PC-9 (cell line): ENCODE measurements at regions of chr19 and their contacts with region 1.

Region 1: GRCh38 chr19:41206926-41207750 is 11.9 kb upstream of the AXL start:
- DNase-seq: no peak
- H3K4me3 ChIP-seq: no peak overlapping the region
- H3K27ac ChIP-seq: no peak overlapping the region
- H3K4me1 ChIP-seq: no peaks in the 10 kb centered on the region
- H3K27me3 ChIP-seq: no peaks in the 10 kb centered on the region
- CTCF ChIP-seq: no peak

Region 2: DNA sequence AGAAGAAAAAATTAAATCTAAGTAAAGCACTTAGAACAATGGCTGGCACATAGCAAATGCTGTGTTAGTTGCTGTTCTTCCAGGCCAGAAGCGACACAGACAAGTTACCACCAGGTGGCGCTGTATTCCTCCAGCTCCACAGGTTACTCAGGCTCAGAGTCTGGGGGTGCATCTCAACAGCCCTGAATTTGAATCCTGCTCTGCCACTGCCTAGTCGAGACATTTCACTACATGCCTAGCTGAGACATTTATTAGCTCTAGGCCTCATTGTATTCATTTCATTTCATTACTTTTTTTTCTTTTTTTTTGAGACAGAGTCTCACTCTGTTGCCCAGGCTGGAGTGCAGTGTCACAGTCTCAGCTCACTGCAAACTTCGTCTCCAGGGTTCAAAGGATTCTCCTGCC is 232.5 kb before region 1 on chr19:
- CTCF ChIA-PET with region 1: no interaction called
- POLR2A ChIA-PET with region 1: no interaction called
- intact Hi-C with region 1: no loop called
- DNase-seq: peak; percentile 42 to 63
- H3K4me3 ChIP-seq: no peak overlapping the region
- H3K27ac ChIP-seq: no peak overlapping the region
- H3K4me1 ChIP-seq: no peaks in the 10 kb centered on the region
- H3K27me3 ChIP-seq: peaks cover 7% of the 10 kb centered on the region; the same call in 1 of the 2 replicates
- CTCF ChIP-seq: peak; percentile 94

Region 3: DNA sequence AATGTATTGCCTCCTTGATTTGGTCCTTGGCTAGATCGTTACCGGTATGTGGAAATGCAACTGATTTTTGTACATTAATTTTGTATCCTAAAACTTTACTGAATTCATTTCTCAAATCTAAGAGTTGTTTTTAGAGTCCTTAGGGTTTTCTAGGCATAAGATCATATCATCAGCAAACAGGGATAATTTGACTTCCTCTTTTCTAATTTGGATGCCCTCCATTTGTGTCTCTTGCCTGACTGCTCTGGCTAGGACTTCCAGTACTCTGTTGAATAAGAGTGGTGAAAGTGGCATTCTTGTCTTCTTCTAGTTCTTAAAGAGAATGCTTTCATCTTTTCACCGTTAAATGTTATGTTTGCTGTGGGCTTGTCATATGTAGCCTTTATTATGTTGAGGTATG is 130.9 kb before region 1 on chr19:
- CTCF ChIA-PET with region 1: no interaction called
- POLR2A ChIA-PET with region 1: no interaction called
- intact Hi-C with region 1: no loop called
- DNase-seq: no peak
- H3K4me3 ChIP-seq: no peak overlapping the region
- H3K27ac ChIP-seq: no peak overlapping the region
- H3K4me1 ChIP-seq: no peaks in the 10 kb centered on the region
- H3K27me3 ChIP-seq: no peaks in the 10 kb centered on the region
- CTCF ChIP-seq: no peak

Region 4: DNA sequence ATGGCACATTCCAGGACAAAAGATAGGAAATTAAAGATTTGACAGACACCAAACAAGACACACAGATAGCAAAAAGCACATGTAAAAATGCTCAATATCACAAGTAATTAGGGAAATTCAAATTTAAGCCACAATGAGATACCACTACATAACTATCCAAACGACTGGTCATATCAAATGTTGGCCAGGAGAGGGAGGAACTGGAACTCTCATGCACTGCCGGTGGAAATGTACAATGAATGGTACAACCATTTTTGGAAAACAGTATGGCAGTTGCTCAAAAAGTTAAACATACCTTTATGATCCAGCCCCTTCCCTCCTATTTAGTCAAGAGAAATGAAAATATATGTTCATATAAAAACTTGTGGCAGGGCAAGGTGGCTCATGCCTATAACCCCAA is 50.9 kb before region 1 on chr19:
- CTCF ChIA-PET with region 1: interaction called, 4 read pairs
- POLR2A ChIA-PET with region 1: no interaction called
- intact Hi-C with region 1: loop called (anchors 10 kb)
- DNase-seq: no peak
- H3K4me3 ChIP-seq: no peak overlapping the region
- H3K27ac ChIP-seq: no peak overlapping the region
- H3K4me1 ChIP-seq: peaks cover 11% of the 10 kb centered on the region
- H3K27me3 ChIP-seq: no peaks in the 10 kb centered on the region
- CTCF ChIP-seq: peak; percentile 34; the same call in 1 of the 2 replicates

Region 5: DNA sequence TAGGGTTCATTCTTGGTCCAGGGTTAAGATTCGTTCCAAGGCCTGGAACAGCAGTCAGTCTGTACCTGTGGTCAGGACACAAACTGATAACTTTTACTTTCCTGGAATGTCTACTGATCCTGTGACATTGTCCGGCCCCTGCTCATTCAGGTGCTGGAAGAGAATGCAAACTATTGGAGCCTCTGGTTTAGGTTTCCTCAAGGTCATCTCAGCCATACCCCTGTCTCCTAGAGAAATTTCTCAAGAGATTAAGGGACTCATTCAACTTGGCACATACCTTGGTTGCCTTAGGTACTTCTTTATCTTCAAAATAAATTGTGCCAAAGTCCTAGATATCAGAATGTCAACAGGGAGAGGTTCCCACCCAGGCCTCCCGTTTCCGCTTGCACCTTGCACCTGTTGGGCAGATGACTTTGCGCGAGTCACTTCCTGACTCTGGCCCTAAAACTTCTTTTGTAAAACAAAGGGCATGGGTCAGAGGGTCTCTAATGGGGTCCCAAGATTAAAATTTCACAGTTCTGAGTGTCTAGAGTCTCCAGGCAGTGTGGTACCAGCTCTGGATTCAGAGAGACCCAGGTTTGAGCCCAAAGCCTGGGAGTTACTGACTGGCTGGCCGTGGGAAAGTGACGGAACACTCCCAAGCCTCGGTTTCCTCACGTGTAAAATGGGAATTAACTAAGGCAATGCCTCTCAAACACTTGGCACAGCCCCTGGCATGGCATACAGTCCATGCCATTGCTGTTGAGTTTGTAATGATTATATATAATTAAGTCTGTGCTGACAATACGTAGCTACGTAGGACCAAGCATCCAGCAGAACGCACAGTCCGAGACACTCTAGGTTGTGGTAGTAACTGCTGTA is 40.0 kb before region 1 on chr19:
- CTCF ChIA-PET with region 1: no interaction called
- POLR2A ChIA-PET with region 1: no interaction called
- intact Hi-C with region 1: no loop called
- DNase-seq: peak; percentile 19 to 59
- H3K4me3 ChIP-seq: no peak overlapping the region
- H3K27ac ChIP-seq: peak overlapping the region; percentile 34; the same call in 1 of the 2 replicates
- H3K4me1 ChIP-seq: peaks cover 16% of the 10 kb centered on the region
- H3K27me3 ChIP-seq: no peaks in the 10 kb centered on the region
- CTCF ChIP-seq: no peak

Region 6: GRCh38 chr19:41248895-41249294 is 41.8 kb after region 1 on chr19:
- CTCF ChIA-PET with region 1: interaction called, 19 read pairs
- POLR2A ChIA-PET with region 1: no interaction called
- intact Hi-C with region 1: no loop called
- DNase-seq: no peak
- H3K4me3 ChIP-seq: no peak overlapping the region
- H3K27ac ChIP-seq: no peak overlapping the region
- H3K4me1 ChIP-seq: no peaks in the 10 kb centered on the region
- H3K27me3 ChIP-seq: no peaks in the 10 kb centered on the region
- CTCF ChIP-seq: no peak

Region 7: DNA sequence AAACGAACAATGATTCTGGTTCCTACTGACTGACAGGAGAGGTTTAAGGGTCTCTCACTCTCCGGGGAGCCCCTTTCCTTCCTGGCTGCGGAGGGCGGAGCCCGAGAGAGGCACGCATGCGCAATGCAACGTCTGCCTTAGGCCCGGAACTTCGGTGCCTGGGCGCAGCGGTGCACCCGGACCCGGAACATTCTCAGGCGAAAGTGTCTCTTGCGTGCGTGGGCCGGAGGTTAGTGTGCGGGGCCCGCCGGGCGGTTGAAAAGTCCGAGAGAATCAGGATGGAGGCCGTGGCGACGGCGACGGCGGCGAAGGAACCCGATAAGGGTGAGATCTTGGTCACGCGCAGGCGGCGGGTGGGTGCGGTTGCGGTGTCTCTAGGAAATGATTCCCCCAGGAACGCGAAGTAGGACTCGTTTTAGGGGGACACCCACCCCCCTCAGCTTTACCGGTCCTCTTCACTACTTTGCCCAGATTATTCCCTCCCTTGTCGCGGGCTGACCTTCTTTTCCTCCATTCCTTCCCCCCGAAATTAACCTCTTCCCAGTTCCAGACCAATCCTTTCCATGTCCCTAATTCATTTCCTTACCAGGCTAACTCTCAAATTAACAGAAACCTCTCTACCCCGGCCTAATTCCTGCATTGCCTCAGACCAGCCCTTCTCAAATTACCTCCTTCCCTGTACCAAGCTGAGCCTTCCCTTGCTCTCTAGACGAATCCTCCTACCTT is 103.1 kb after region 1 on chr19 and contains the start of gene CCDC97:
- CTCF ChIA-PET with region 1: no interaction called
- POLR2A ChIA-PET with region 1: interaction called, 11 read pairs
- intact Hi-C with region 1: loop called (anchors 5 kb)
- DNase-seq: peak; percentile 67 to 84
- H3K4me3 ChIP-seq: peak within 1 kb of the TSS; percentile 88
- H3K27ac ChIP-seq: peak within 1 kb of the TSS; percentile 87
- H3K4me1 ChIP-seq: peaks cover 16% of the 10 kb centered on the region
- H3K27me3 ChIP-seq: no peaks in the 10 kb centered on the region
- CTCF ChIP-seq: no peak
- total RNA-seq, gene CCDC97: 24.1 and 26.4 TPM in 2 replicates

Region 8: DNA sequence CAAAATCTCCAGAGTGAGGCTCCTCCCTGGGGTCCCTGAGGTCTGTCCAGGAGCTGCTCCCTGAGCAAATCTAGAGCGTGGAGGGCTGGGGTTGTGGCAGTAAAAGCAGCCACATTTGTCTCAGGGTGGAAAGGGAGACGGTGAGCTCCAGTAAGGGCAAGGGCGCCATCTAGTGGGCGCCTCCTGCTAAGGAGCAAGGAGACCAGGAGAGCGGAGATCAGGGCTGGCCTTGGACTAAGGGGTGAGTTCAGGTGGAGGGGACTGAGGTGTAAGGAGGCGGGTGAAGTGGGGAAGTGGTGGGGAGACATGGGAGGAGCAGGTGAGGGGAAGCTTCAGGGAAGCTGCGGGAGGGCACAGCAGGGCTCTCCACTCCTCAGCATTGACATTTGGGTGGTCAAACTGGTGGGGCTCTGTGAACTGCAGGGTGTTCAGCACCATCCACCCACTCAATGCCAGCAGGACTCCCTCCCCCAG is 363.5 kb after region 1 on chr19:
- CTCF ChIA-PET with region 1: no interaction called
- POLR2A ChIA-PET with region 1: no interaction called
- intact Hi-C with region 1: loop called (anchors 10 kb)
- DNase-seq: peak in 1 of 2 experiments; percentile 69
- H3K4me3 ChIP-seq: no peak overlapping the region
- H3K27ac ChIP-seq: no peak overlapping the region
- H3K4me1 ChIP-seq: no peaks in the 10 kb centered on the region
- H3K27me3 ChIP-seq: peaks cover 57% of the 10 kb centered on the region
- CTCF ChIP-seq: peak; percentile 93